CD4-positive, alpha-beta T cell (primary cell): ENCODE measurements at regions of chr13 and their contacts with region 1.

Region 1: DNA sequence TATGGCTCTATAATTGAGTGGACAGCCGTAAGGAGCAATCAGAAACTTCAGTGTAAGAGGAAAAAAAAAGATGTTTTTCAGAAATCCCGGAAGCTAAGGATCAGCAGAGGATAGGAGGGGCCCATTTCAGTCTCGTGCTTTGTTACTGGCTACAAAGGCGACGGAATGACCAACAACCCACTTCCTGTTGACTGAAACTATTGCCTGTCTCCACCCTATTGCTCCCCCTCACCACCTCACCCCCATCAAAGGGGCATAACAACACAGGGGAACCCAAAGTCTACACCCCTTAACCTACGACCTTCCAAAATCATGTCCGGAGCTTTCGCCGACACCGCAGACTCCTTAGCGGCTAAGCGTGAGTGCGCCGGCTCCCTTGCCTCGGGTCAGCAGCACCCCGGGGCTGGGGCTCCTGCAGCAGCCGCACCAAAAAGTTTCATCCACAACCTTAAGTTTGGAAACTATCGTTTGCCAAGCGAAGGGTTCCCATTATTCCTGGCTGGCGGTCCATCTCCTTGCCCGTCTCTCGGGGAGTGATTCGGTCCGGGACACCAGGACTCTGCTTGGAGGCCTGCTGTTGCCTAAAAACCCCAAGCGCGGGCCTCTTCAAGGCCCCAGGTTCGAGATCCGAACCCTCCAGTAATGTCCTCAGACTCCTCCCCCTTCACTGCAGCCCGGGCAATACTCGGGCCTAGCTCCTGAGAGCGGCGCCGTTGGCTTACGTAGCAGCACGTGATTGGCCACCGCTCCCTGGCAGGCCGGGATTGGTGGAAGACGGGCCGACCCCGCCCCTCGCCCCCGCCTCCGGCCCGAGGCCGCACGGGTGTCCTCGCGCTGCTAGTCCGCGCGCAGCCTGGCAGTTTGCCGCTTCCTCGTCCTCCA is at the start of gene TPP2:
- DNase-seq: peak; percentile 96 to 99 (median 98)
- ATAC-seq: peak; percentile 81
- H3K4me3 ChIP-seq: peak within 1 kb of the TSS; percentile 76
- H3K4me3 Mint-ChIP-seq: peak within 1 kb of the TSS; percentile 97
- H3K27ac ChIP-seq: peak within 1 kb of the TSS; percentile 97 to 98
- H3K27ac Mint-ChIP-seq: peak within 1 kb of the TSS; percentile 100
- H3K4me1 ChIP-seq: peaks cover 32% of the 10 kb centered on the region
- H3K4me1 Mint-ChIP-seq: peaks cover 78% of the 10 kb centered on the region
- H3K27me3 ChIP-seq: no peaks in the 10 kb centered on the region
- H3K27me3 Mint-ChIP-seq: no peaks in the 10 kb centered on the region
- CTCF ChIP-seq: no peak
- total RNA-seq, gene TPP2: 146 to 147 TPM

Region 2: GRCh38 chr13:102394158-102395053 is 202.0 kb before region 1 on chr13:
- CTCF ChIA-PET with region 1: interaction called, 3 read pairs
- POLR2A ChIA-PET with region 1: interaction called, 7 read pairs
- intact Hi-C with region 1: loop called in 1 of 2 experiments (anchors 2 kb)
- DNase-seq: peak; percentile 93 to 98 (median 96)
- ATAC-seq: peak; percentile 94
- H3K4me3 ChIP-seq: peak overlapping the region; percentile 80
- H3K4me3 Mint-ChIP-seq: peak overlapping the region; percentile 95
- H3K27ac ChIP-seq: peak overlapping the region in 1 of 2 donors; percentile 50
- H3K27ac Mint-ChIP-seq: peak overlapping the region; percentile 77
- H3K4me1 ChIP-seq: peaks cover 18% of the 10 kb centered on the region
- H3K4me1 Mint-ChIP-seq: peaks cover 19% of the 10 kb centered on the region
- H3K27me3 ChIP-seq: peaks cover 3 to 6% of the 10 kb centered on the region in 2 experiments
- H3K27me3 Mint-ChIP-seq: peaks cover 20% of the 10 kb centered on the region
- CTCF ChIP-seq: no peak

Region 3: DNA sequence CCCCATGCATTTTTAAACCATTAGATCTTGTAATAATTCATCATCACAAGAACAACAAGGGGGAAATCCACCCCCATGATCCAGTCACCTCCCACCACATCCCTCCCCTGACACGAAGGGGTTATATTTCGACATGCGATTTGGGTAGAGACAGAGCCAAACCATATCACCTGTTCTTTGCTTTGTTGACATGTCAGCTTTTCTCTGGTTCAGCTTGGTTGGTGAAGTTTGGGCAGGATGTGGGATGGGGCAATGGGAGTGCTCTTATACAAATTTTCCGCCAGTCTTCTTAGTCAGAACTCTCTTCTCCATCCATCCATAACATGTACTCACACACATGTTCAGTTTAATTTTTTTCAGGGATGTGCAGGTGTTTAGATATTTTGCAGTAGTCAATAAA is 13.3 kb after region 1 on chr13:
- CTCF ChIA-PET with region 1: interaction called, 7 read pairs
- POLR2A ChIA-PET with region 1: interaction called, 116 read pairs
- intact Hi-C with region 1: loop called (anchors 2 kb)
- DNase-seq: no peak
- ATAC-seq: peak; percentile 41
- H3K4me3 ChIP-seq: no peak overlapping the region
- H3K4me3 Mint-ChIP-seq: peak overlapping the region; percentile 9
- H3K27ac ChIP-seq: no peak overlapping the region
- H3K27ac Mint-ChIP-seq: peak overlapping the region; percentile 71
- H3K4me1 ChIP-seq: peaks cover 6% of the 10 kb centered on the region
- H3K4me1 Mint-ChIP-seq: peaks cover 65% of the 10 kb centered on the region
- H3K27me3 ChIP-seq: no peaks in the 10 kb centered on the region
- H3K27me3 Mint-ChIP-seq: no peaks in the 10 kb centered on the region
- CTCF ChIP-seq: no peak

Region 4: DNA sequence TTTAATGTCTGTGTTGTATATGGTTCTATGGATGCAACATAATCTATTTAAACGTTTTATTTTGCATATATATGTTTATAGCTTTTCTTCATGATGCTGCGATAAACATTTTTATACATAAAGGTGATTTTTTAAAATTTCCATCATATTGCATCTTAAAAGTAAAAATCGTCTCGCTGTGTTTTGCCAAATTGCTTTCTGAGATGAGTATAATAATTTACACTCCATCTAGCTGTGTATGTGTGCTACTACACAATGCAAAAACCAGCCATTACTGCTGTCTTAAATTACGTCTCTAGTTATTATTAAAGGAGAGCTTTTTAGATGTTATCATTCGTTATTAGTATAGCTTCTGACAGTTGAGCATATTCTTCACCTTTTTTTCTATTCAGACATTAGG is 61.2 kb after region 1 on chr13:
- CTCF ChIA-PET with region 1: no interaction called
- POLR2A ChIA-PET with region 1: interaction called, 8 read pairs
- intact Hi-C with region 1: loop called (anchors 1 to 2 kb)
- DNase-seq: peak in 2 of 14 experiments; percentile 9
- ATAC-seq: no peak
- H3K4me3 ChIP-seq: no peak overlapping the region
- H3K4me3 Mint-ChIP-seq: no peak overlapping the region
- H3K27ac ChIP-seq: no peak overlapping the region
- H3K27ac Mint-ChIP-seq: no peak overlapping the region
- H3K4me1 ChIP-seq: no peaks in the 10 kb centered on the region
- H3K4me1 Mint-ChIP-seq: peaks cover 4% of the 10 kb centered on the region
- H3K27me3 ChIP-seq: no peaks in the 10 kb centered on the region
- H3K27me3 Mint-ChIP-seq: no peaks in the 10 kb centered on the region
- CTCF ChIP-seq: peak; percentile 13

Region 5: GRCh38 chr13:102773441-102774215 is 177.2 kb after region 1 on chr13 and contains the start of gene TEX30:
- CTCF ChIA-PET with region 1: interaction called, 5 read pairs
- POLR2A ChIA-PET with region 1: interaction called, 95 read pairs
- intact Hi-C with region 1: loop called (anchors 1 to 5 kb)
- DNase-seq: peak; percentile 73 to 94 (median 84)
- ATAC-seq: peak; percentile 96
- H3K4me3 ChIP-seq: peak within 1 kb of the TSS; percentile 81
- H3K4me3 Mint-ChIP-seq: peak within 1 kb of the TSS; percentile 97
- H3K27ac ChIP-seq: peak within 1 kb of the TSS; percentile 37 to 69
- H3K27ac Mint-ChIP-seq: peak within 1 kb of the TSS; percentile 94
- H3K4me1 ChIP-seq: peaks cover 20% of the 10 kb centered on the region
- H3K4me1 Mint-ChIP-seq: peaks cover 47% of the 10 kb centered on the region
- H3K27me3 ChIP-seq: no peaks in the 10 kb centered on the region
- H3K27me3 Mint-ChIP-seq: no peaks in the 10 kb centered on the region
- CTCF ChIP-seq: no peak
- total RNA-seq, gene TEX30: 4.6 to 6.3 TPM

Region 6: DNA sequence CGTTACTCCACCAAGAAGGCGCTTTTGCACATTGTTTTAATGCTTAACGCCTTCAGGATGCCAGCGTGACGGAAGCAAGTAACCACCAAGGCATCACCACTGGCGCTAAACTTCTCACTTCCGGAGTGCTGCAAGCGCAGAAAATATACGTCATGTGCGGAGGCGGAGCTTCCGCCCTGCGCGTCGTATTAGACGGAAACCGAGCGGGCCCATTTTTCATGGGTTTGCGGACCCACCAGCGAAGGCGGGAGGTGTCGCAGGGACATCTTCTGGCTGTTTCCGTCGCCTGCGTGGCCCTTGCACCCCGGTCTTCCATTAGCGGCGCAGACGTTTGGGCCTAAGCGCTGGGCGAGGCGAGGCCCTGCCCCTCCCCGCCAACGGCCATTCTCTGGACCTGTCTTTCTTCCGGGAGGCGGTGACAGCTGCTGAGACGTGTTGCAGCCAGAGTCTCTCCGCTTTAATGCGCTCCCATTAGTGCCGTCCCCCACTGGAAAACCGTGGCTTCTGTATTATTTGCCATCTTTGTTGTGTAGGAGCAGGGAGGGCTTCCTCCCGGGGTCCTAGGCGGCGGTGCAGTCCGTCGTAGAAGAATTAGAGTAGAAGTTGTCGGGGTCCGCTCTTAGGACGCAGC is 249.4 kb after region 1 on chr13 and contains the start of gene ERCC5:
- CTCF ChIA-PET with region 1: interaction called, 9 read pairs
- POLR2A ChIA-PET with region 1: interaction called, 575 read pairs
- intact Hi-C with region 1: loop called (anchors 1 kb)
- DNase-seq: peak; percentile 91 to 98 (median 95)
- ATAC-seq: peak; percentile 69
- H3K4me3 ChIP-seq: peak within 1 kb of the TSS; percentile 98
- H3K4me3 Mint-ChIP-seq: peak within 1 kb of the TSS; percentile 100
- H3K27ac ChIP-seq: peak within 1 kb of the TSS; percentile 97 to 99
- H3K27ac Mint-ChIP-seq: peak within 1 kb of the TSS; percentile 100
- H3K4me1 ChIP-seq: peaks cover 31% of the 10 kb centered on the region
- H3K4me1 Mint-ChIP-seq: peaks cover 52% of the 10 kb centered on the region
- H3K27me3 ChIP-seq: no peaks in the 10 kb centered on the region
- H3K27me3 Mint-ChIP-seq: no peaks in the 10 kb centered on the region
- CTCF ChIP-seq: peak; percentile 12
- total RNA-seq, gene ERCC5: 129 to 136 TPM